ENCODE measurements at regions of chr3 and their contacts with region 1.

Region 1: DNA sequence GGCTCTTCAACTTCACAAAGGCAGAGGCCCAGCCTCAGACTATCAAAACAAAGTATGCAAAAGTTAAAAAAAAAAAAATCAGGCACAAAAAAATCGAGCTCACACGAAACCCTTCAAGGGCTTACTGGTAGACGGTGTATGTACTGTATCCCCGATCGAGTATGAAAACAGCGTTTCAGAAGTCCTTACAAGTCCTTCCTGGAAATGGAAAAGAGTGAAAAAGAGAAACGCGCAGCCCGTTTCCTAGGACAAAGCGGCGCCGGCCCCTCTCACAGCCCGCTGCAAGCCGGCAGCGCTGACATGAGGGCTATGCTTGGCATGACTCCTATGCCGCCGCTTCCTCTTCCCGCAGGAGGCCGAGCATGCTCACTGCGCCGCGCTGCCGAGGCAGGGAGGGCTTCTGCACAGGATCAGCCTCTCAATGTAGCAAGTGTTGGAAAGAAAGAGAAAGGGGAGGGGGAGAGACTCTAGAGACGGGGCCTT is at the start of gene VGLL4:
- DNase-seq: peak; percentile 80
- ATAC-seq: peak; percentile 96
- H3K4me3 ChIP-seq: peak within 1 kb of the TSS; percentile 85 to 89 (median 88)
- H3K27ac ChIP-seq: peak within 1 kb of the TSS; percentile 90
- H3K4me1 ChIP-seq: peaks cover 27% of the 10 kb centered on the region
- H3K27me3 ChIP-seq: no peaks in the 10 kb centered on the region; a peak in 1 of 5 replicates
- CTCF ChIP-seq: peak; percentile 63
- EP300 ChIP-seq: no peak
- POLR2A ChIP-seq: peak; percentile 63 to 83; a peak in 2 of 4 replicates
- RAD21 ChIP-seq: peak; percentile 78
- total RNA-seq, gene VGLL4: 19.8 and 23.2 TPM in 2 replicates

Region 2: DNA sequence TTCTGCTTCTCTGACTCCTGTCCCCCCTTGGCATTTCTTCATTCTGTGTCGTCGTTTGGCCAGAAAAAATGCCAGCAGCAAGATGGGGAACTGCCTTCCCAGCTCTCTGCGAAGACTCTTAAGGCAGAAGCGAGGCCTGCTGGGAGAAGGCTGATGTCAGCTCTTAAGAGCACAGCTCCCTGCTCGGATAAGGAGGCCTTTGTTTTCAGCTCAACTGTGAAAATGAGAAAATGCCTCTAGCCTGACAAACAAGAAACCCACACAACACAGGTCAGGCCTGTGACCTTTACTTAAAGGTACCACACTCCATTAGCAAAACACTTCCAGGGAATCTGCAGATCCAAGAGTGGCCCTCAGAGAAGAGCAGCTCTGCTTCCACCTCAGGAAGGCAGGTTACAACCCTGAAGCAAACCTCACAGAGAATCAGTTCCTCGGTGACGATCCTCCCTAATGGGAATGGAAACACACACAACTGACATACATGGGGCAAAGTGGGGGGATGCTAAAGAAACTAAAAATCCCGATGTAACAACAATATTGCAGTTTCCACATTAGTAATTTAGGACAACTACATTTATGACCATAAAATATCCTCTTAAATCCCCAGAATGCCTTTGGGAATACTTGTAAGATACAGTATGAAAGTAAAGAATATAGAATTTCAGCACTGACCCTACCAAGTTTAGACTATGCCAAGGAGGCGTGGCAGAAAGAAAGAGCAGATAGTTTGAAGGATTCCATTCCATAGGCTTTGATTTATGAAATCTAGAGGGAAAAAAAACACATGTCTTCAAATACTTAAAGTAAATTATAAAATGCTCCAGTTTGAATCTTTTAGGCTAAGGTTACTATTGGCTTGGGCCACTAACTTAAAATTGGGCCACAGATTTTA is 52.0 kb before region 1 on chr3:
- CTCF ChIA-PET with region 1: no interaction called
- POLR2A ChIA-PET with region 1: interaction called, 8 read pairs
- in situ Hi-C with region 1: loop called (anchors 5 kb)
- intact Hi-C with region 1: loop called (anchors 1 kb)
- DNase-seq: peak; percentile 82
- ATAC-seq: peak; percentile 82
- H3K4me3 ChIP-seq: no peak overlapping the region
- H3K27ac ChIP-seq: peak overlapping the region; percentile 41
- H3K4me1 ChIP-seq: peaks cover 78% of the 10 kb centered on the region
- H3K27me3 ChIP-seq: no peaks in the 10 kb centered on the region
- CTCF ChIP-seq: no peak
- EP300 ChIP-seq: peak in 1 of 2 experiments; percentile 36; a peak in 1 of 4 replicates
- POLR2A ChIP-seq: no peak
- RAD21 ChIP-seq: no peak

Region 3: GRCh38 chr3:11610044-11610671 is 33.5 kb before region 1 on chr3:
- CTCF ChIA-PET with region 1: no interaction called
- POLR2A ChIA-PET with region 1: interaction called, 3 read pairs
- in situ Hi-C with region 1: no loop called
- intact Hi-C with region 1: loop called (anchors 5 kb)
- DNase-seq: peak; percentile 81
- ATAC-seq: peak; percentile 99
- H3K4me3 ChIP-seq: peak overlapping the region in 1 of 3 experiments; percentile 14; a peak in 1 of 6 replicates
- H3K27ac ChIP-seq: peak overlapping the region; percentile 55
- H3K4me1 ChIP-seq: peaks cover 75% of the 10 kb centered on the region
- H3K27me3 ChIP-seq: no peaks in the 10 kb centered on the region
- CTCF ChIP-seq: no peak
- EP300 ChIP-seq: peak in 1 of 2 experiments; percentile 35; a peak in 2 of 4 replicates
- POLR2A ChIP-seq: no peak
- RAD21 ChIP-seq: no peak

Region 4: DNA sequence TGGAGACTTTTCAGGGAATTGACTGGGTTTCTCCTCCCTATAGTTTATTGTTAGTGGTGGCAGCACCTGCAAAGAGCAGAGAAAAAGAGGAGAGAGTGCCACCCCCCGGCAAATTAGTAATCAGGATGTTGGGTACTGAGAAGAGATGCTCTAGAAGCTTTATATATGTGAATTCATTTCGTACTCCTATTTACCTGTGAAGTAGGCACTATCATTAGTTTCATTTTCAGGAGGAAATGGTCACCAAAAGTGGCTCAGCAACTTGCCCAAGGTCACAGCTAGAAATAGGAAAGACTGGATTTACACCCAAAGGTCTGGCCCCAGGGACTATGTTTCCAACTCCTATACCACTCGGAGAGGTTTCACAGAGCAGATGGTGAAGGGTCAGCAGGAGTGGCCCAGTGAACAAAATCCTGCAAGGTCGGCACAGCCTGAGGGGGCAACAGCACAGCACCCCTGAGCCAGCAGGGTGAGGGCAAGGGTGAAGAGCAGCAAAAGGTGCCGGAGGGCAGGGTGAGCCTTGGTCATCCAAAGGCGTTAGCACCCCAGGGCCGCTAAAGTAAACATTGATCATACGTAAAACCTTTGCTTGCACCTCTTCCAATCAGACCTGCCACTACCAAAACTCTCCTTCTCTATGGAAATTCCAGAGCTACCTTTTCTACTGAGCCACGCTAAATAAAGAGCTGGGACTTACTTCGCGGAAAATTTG is 23.5 kb before region 1 on chr3:
- CTCF ChIA-PET with region 1: no interaction called
- POLR2A ChIA-PET with region 1: interaction called, 15 read pairs
- in situ Hi-C with region 1: no loop called
- intact Hi-C with region 1: loop called (anchors 2 kb)
- DNase-seq: no peak
- ATAC-seq: peak; percentile 39
- H3K4me3 ChIP-seq: peak overlapping the region in 2 of 3 experiments; percentile 23 to 61; a peak in 2 of 6 replicates
- H3K27ac ChIP-seq: peak overlapping the region; percentile 86
- H3K4me1 ChIP-seq: peaks cover 100% of the 10 kb centered on the region
- H3K27me3 ChIP-seq: no peaks in the 10 kb centered on the region
- CTCF ChIP-seq: no peak
- EP300 ChIP-seq: no peak
- POLR2A ChIP-seq: no peak
- RAD21 ChIP-seq: no peak

Region 5: DNA sequence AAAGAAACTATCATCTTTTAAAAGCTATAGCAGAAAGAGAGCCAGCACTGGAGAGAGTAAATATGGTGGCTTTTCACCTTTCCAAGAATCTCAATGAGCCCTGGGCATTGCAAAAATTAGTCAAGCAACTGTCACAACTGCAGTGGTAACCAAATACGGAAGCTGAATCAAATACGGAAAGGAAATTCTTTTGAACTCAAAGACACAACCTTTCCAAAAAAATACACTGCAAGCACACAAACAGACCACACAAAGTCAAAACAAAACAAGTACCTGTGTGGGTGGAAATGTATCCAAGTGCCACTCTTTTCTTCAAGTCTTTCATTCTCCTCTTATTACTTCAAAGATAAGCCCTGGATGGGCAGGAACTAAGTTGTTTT is 17.6 kb before region 1 on chr3:
- CTCF ChIA-PET with region 1: interaction called, 3 read pairs
- POLR2A ChIA-PET with region 1: interaction called, 11 read pairs
- in situ Hi-C with region 1: no loop called
- intact Hi-C with region 1: no loop called
- DNase-seq: no peak
- ATAC-seq: peak; percentile 42; the same call in 2 of the 3 replicates
- H3K4me3 ChIP-seq: no peak overlapping the region; a peak in 1 of 6 replicates
- H3K27ac ChIP-seq: peak overlapping the region; percentile 66
- H3K4me1 ChIP-seq: peaks cover 84% of the 10 kb centered on the region
- H3K27me3 ChIP-seq: no peaks in the 10 kb centered on the region
- CTCF ChIP-seq: no peak
- EP300 ChIP-seq: no peak
- POLR2A ChIP-seq: no peak
- RAD21 ChIP-seq: no peak

Region 6: DNA sequence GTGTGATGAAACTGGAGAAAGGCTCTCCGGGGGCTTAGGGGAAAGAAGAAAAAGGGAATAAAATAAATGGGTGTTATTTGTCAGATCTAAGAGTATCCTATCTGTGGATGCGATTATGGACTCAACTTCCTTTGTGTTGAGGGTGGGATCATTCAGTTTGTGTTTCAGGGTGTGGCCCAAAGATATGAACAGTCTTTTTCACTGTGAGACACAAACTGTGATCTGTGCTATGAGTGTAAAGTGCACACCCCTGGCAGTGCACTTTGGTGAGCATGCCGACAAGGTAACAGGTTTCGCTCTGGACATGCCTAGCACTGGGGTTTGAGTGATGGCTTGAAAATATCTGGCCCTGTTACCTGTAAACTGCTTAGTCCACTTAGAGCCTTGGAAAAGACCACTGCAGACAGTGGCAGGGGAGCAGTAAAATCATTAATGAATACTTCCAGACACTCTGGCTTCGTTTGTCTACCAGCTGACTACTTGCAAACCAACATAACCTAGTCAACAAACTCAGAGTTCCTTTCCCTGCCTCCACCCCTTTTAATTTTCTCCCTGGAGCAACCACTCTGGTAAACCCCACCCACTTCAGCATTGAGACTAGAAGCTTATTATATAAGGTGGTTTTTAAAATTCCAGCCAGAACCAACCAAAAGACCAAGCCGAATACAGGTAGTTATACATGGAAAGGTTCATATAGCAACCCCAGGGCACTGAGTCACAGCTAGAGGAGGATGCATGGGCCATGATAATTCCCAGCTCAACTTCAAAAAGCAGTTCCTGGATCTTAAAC is 147.9 kb after region 1 on chr3:
- CTCF ChIA-PET with region 1: no interaction called
- POLR2A ChIA-PET with region 1: no interaction called
- in situ Hi-C with region 1: no loop called
- intact Hi-C with region 1: no loop called
- DNase-seq: no peak
- ATAC-seq: no peak
- H3K4me3 ChIP-seq: no peak overlapping the region
- H3K27ac ChIP-seq: no peak overlapping the region
- H3K4me1 ChIP-seq: peaks cover 9% of the 10 kb centered on the region
- H3K27me3 ChIP-seq: no peaks in the 10 kb centered on the region
- CTCF ChIP-seq: no peak
- EP300 ChIP-seq: no peak
- POLR2A ChIP-seq: no peak
- RAD21 ChIP-seq: no peak

Measured in HepG2 (cell line).